Common myeloid progenitor, CD34-positive (primary cell): ENCODE measurements at regions of chr19 and their contacts with region 1.

Region 1: GRCh38 chr19:48965040-48965805 is at the start of gene FTL:
- DNase-seq: peak; percentile 95 to 98 (median 97)
- H3K4me3 ChIP-seq: peak within 1 kb of the TSS; percentile 81 to 96 (median 92)
- H3K27ac ChIP-seq: peak within 1 kb of the TSS; percentile 97 to 98
- H3K4me1 ChIP-seq: peaks cover 13 to 59% (median 51%) of the 10 kb centered on the region in 4 experiments
- H3K27me3 ChIP-seq: no peaks in the 10 kb centered on the region

Region 2: DNA sequence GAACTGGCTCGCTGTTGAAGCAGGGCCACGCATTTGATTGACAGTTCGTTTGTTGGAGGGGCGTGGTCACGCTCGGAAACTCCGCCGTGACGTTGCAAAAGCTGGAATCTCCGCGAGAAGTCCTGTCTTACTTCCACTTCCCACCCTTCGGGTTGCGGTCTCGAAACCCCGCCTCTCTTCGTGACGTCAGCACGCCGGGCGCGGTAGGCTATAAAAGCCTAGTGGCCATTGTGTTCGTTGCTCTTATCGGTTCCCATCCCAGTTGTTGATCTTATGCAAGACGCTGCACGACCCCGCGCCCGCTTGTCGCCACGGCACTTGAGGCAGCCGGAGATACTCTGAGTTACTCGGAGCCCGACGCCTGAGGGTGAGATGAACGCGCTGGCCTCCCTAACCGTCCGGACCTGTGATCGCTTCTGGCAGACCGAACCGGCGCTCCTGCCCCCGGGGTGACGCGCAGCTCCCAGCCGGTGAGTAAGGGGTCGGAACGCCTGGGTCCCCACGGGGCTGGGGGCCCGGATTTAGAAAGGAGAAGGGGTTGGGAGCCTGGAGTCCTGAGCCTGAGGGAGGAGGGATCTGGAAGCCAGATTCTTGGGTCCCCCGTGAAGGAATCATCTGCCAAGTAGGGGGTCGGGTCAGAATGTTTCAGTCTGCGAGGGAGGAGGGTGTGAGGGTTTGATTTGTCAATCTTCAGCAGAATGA is 92.9 kb before region 1 on chr19 and contains the start of gene PPP1R15A:
- CTCF ChIA-PET with region 1: interaction called, 6 read pairs
- POLR2A ChIA-PET with region 1: interaction called, 26 read pairs
- DNase-seq: peak; percentile 97 to 98 (median 98)
- H3K4me3 ChIP-seq: peak within 1 kb of the TSS; percentile 80 to 100 (median 99)
- H3K27ac ChIP-seq: peak within 1 kb of the TSS; percentile 100
- H3K4me1 ChIP-seq: peaks cover 9 to 54% (median 37%) of the 10 kb centered on the region in 4 experiments
- H3K27me3 ChIP-seq: no peaks in the 10 kb centered on the region